ENCODE measurements at regions of chr15 and their contacts with region 1.

Region 1: DNA sequence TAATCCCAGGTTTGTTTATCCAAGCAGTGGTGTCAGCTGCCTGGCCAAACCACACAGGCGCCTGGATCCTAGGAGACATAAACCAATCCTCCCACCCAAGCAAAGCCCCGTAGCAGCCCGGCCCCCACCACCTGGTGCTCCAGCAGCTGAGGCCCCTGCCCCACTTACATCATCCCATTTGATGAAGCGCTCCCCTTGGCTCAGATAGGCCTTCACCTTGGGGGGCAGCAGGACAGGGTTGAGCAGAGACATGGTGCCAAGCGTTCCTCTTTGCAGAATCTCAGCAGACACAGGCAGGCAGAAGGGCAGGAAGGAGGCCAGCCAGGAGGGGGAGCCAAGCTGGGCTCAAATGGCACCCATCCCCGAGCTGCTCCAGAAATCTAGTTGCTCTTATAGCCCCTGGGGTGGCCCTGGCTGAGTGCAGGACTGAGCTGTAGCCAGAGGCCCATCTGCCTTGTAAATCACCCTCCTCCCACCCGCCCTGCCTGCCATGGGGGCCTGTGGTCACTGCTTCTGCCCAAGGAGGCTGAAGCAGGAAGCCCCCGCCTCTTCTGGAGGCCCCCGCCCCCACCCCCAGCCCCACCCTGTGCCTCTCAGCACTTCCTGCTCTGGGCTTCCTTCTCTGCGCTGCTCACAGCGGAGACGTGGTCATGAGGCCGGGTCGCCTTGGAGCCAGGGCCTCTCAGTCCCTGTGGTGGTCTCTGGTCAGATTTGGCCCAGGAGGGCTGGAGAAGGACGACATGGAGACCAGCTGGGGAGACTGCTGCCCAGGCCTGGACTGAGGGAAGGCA is at the start of gene PLCB2:
- DNase-seq: peak; percentile 52 to 81 (median 65)
- H3K4me3 ChIP-seq: peak within 1 kb of the TSS; percentile 100
- H3K4me3 Mint-ChIP-seq: peak within 1 kb of the TSS; percentile 93 to 98 (median 97)
- H3K27ac ChIP-seq: peak within 1 kb of the TSS; percentile 85
- H3K27ac Mint-ChIP-seq: peak within 1 kb of the TSS; percentile 92 to 98 (median 94)
- H3K4me1 ChIP-seq: peaks cover 41% of the 10 kb centered on the region
- H3K4me1 Mint-ChIP-seq: peaks cover 47 to 57% (median 55%) of the 10 kb centered on the region in 3 donors
- H3K27me3 ChIP-seq: no peaks in the 10 kb centered on the region
- H3K27me3 Mint-ChIP-seq: no peaks in the 10 kb centered on the region
- total RNA-seq, gene PLCB2: 57.3 to 57.7 TPM

Region 2: GRCh38 chr15:40217159-40217824 is 90.3 kb before region 1 on chr15:
- CTCF ChIA-PET with region 1: interaction called, 23 read pairs
- POLR2A ChIA-PET with region 1: no interaction called
- DNase-seq: peak in 4 of 5 donors; percentile 13 to 64 (median 59)
- H3K4me3 ChIP-seq: no peak overlapping the region
- H3K4me3 Mint-ChIP-seq: no peak overlapping the region
- H3K27ac ChIP-seq: no peak overlapping the region
- H3K27ac Mint-ChIP-seq: no peak overlapping the region
- H3K4me1 ChIP-seq: no peaks in the 10 kb centered on the region
- H3K4me1 Mint-ChIP-seq: no peaks in the 10 kb centered on the region
- H3K27me3 ChIP-seq: no peaks in the 10 kb centered on the region
- H3K27me3 Mint-ChIP-seq: no peaks in the 10 kb centered on the region

Region 3: GRCh38 chr15:40289140-40289775 is 18.4 kb before region 1 on chr15:
- CTCF ChIA-PET with region 1: interaction called, 21 read pairs
- POLR2A ChIA-PET with region 1: interaction called, 8 read pairs
- DNase-seq: no peak
- H3K4me3 ChIP-seq: no peak overlapping the region
- H3K4me3 Mint-ChIP-seq: no peak overlapping the region
- H3K27ac ChIP-seq: no peak overlapping the region
- H3K27ac Mint-ChIP-seq: no peak overlapping the region
- H3K4me1 ChIP-seq: no peaks in the 10 kb centered on the region
- H3K4me1 Mint-ChIP-seq: no peaks in the 10 kb centered on the region
- H3K27me3 ChIP-seq: no peaks in the 10 kb centered on the region
- H3K27me3 Mint-ChIP-seq: no peaks in the 10 kb centered on the region

Region 4: DNA sequence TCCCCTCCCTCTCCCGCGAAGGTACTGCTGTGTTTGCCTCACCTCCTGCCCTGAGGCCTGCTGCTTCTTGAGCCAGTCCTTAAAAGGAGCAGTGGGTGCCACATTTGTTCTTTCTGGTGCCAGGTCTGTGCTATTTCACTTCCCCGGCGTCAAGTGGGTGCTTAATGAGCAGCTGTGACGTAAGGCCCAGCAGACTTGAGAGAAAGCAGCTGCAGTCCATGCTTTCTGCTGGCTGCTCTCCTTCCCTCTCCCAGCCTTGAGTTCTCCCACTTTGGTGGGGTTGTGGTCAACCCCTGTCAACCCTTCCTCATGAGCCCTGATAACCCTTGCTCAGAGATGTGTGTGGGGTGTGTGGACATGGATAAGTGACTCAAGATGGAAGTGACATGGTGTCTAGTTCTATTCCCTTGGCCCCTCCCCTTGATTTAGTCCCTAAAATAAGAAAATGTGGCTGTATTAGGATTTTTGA is 22.8 kb after region 1 on chr15:
- CTCF ChIA-PET with region 1: interaction called, 189 read pairs
- POLR2A ChIA-PET with region 1: no interaction called
- DNase-seq: no peak
- H3K4me3 ChIP-seq: no peak overlapping the region
- H3K4me3 Mint-ChIP-seq: no peak overlapping the region
- H3K27ac ChIP-seq: peak overlapping the region; percentile 27
- H3K27ac Mint-ChIP-seq: no peak overlapping the region
- H3K4me1 ChIP-seq: peaks cover 17% of the 10 kb centered on the region
- H3K4me1 Mint-ChIP-seq: peaks cover 6 to 16% (median 6%) of the 10 kb centered on the region in 3 donors
- H3K27me3 ChIP-seq: no peaks in the 10 kb centered on the region
- H3K27me3 Mint-ChIP-seq: no peaks in the 10 kb centered on the region

Region 5: DNA sequence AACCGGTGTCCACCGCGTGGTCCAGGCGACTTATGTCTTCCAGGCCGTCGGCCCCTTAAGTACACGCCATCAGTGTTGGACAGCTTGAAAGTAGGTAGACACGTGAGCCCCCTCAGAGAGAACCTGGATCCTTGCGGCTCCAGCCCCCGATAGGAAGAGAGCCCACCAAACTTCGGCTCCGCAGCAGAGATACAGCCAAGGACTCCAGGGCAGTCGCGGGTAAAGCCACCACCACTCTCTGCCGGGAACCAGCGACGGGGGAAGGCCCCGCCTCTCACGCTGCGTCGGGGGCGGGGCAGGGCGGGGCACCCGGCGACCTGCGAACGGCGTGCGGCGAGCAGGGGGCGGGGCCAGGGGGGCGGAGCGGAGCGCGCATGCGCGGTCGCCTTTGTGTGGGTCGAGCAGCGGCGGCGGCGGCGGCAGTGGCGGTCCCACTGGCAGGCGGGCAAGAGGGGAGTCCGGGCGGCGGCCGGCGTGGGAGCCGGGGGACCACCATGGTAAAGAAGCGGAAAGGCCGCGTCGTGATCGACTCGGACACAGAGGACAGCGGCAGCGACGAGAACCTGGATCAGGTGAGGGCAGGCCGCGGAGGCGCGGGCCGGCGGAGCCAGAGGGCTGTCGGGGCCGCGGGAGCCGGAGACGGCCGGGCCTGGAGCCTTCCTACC is 1109.3 kb after region 1 on chr15 and contains the start of gene RTF1:
- CTCF ChIA-PET with region 1: no interaction called
- POLR2A ChIA-PET with region 1: interaction called, 11 read pairs
- DNase-seq: peak; percentile 95 to 98 (median 97)
- H3K4me3 ChIP-seq: peak within 1 kb of the TSS; percentile 97
- H3K4me3 Mint-ChIP-seq: peak within 1 kb of the TSS; percentile 92 to 99 (median 95)
- H3K27ac ChIP-seq: peak within 1 kb of the TSS; percentile 72
- H3K27ac Mint-ChIP-seq: peak within 1 kb of the TSS; percentile 91 to 96 (median 95)
- H3K4me1 ChIP-seq: peaks cover 29% of the 10 kb centered on the region
- H3K4me1 Mint-ChIP-seq: peaks cover 41 to 50% (median 43%) of the 10 kb centered on the region in 3 donors
- H3K27me3 ChIP-seq: no peaks in the 10 kb centered on the region
- H3K27me3 Mint-ChIP-seq: no peaks in the 10 kb centered on the region
- total RNA-seq, gene RTF1: 32.9 to 35.5 TPM